Activated T-helper 2 cell treated with anti-CD3 and anti-CD28 coated beads, Interferon-gamma antibody, Interleukin-2, Interleukin-4, amounts not matched to agents 10 μg/mL and 5 μg/mL and 100 μg/mL, durations not matched to agents 14 hours and 24 hours and 36 hours (primary cell): ENCODE measurements at regions of chr3 and their contacts with region 1.

Region 1: GRCh38 chr3:125202197-125202596 is 10.4 kb downstream of the SLC12A8 start:
- DNase-seq: no peak
- H3K4me3 Mint-ChIP-seq: no peak overlapping the region
- H3K27ac Mint-ChIP-seq: no peak overlapping the region
- H3K4me1 Mint-ChIP-seq: no peaks in the 10 kb centered on the region
- H3K27me3 Mint-ChIP-seq: peaks cover 46% of the 10 kb centered on the region

Region 2: DNA sequence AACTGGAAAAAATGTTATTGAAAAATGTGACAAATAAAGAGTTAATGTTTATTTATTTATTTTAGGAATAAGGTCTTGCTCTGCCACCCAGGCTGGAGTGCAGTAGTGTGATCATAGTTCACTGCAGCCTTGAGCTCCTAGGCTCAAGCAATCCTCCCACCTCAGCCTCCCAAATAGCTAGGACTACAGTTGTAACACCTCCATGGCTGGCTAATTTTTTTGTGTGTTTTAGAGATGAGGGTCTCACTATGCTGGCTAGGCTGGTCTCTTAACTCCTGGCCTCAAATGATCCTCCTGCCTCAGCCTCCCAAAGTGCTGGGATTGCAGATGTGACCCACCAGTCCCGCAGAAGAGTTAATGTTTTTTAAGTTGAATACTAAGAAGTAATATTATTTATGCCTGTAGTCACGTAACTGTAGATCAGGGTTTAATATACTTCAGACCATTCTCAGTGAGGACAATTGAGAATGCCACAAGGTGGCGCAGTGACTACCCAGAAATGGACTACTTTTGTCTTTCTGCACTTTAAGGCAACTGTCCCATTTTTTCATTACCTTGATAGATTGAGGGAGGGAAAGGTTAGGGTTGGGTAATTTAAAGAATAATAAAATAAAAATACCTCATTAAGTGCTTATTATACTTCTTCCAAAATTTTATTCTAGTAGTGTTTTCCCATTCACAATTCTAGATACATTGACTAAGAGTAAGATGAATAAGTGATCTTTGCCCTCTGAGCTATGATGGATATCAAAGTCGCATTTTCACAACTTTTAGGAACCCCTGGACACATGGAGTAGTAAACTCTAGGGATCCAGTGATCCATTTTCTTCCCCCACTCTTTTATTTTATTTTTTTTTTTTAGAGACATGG is 273.6 kb before region 1 on chr3:
- intact Hi-C with region 1: loop called (anchors 1 kb)
- DNase-seq: peak; percentile 35
- H3K4me3 Mint-ChIP-seq: no peak overlapping the region
- H3K27ac Mint-ChIP-seq: no peak overlapping the region
- H3K4me1 Mint-ChIP-seq: peaks cover 4% of the 10 kb centered on the region
- H3K27me3 Mint-ChIP-seq: peaks cover 58% of the 10 kb centered on the region